Naive thymus-derived CD4-positive, alpha-beta T cell (primary cell): ENCODE measurements at regions of chr2 and their contacts with region 1.

Region 1: DNA sequence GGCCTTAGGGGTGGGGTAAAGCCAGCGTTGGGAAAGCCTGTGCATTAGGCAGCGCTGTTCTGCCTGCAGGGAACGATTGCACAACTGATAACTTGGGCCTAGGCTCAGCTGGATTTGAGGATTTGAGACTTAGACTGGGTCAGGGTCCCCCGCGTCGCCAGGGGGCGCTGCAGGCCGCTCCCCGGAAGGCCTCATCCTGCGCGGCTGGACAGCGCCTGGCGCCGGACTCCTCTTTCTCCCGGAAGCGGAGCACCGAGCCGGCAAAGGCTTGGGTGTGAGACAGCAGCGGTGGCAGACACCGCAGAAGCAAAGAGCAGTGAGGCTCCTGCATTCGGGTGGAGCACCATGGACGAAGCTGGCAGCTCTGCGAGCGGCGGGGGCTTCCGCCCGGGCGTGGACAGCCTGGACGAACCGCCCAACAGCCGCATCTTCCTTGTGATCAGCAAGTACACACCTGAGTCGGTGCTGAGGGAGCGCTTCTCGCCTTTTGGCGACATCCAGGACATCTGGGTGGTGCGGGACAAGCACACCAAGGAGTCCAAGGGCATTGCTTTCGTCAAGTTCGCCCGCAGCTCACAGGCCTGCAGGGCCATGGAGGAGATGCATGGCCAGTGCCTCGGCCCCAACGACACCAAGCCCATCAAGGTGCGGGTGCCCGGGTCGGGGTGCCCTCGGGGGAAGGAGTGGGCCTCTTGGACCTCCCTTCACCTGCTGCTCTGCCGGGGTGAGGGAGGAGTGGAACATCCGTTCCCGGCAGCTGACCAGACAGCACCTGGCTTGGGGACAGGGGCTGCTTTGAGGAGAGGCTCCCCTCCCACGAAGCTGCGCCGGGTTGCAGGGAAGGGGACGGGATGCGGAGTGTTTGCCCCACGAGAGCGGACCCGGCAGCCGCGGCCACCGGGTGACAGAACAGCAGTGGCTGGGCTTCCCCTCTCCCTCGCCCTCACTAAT is at the start of gene RBM45:
- DNase-seq: peak; percentile 68 to 91 (median 78)
- ATAC-seq: peak; percentile 97
- H3K4me3 ChIP-seq: peak within 1 kb of the TSS; percentile 90
- H3K4me3 Mint-ChIP-seq: peak within 1 kb of the TSS; percentile 92 to 96 (median 94)
- H3K27ac ChIP-seq: peak within 1 kb of the TSS; percentile 71
- H3K27ac Mint-ChIP-seq: peak within 1 kb of the TSS; percentile 80 to 93 (median 88)
- H3K4me1 ChIP-seq: peaks cover 6 to 14% of the 10 kb centered on the region in 2 donors
- H3K4me1 Mint-ChIP-seq: peaks cover 20 to 47% (median 39%) of the 10 kb centered on the region in 7 donors
- H3K27me3 ChIP-seq: no peaks in the 10 kb centered on the region
- H3K27me3 Mint-ChIP-seq: peaks cover 0 to under 1% (median 0%) of the 10 kb centered on the region in 5 donors
- total RNA-seq, gene RBM45: 8.0 to 26.7 (median 17.5) TPM

Region 2: DNA sequence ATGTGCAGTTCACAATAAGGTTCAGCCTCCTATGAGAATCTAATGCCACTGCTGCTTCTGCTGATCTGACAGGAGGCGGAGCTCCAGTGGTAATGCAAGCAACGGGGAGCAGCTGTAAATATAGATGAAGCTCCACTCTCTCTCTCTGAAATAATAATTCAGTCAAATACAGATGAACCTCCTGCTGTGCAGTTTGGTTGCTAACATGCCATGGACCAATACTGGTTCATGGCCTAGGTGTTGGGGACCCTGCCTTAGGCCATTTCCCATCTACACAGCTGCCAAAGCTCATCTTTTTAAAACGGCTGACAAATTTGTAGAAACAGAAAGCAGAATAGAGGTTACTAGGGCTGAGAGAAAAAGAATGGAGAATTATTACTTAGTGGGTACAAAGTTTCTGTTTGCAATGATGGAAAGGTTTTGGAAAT is 910.5 kb before region 1 on chr2:
- CTCF ChIA-PET with region 1: no interaction called
- POLR2A ChIA-PET with region 1: no interaction called
- intact Hi-C with region 1: no loop called
- DNase-seq: no peak
- ATAC-seq: no peak
- H3K4me3 ChIP-seq: no peak overlapping the region
- H3K4me3 Mint-ChIP-seq: no peak overlapping the region
- H3K27ac ChIP-seq: no peak overlapping the region
- H3K27ac Mint-ChIP-seq: no peak overlapping the region
- H3K4me1 ChIP-seq: no peaks in the 10 kb centered on the region
- H3K4me1 Mint-ChIP-seq: peaks cover 0 to 10% (median 3%) of the 10 kb centered on the region in 7 donors
- H3K27me3 ChIP-seq: no peaks in the 10 kb centered on the region
- H3K27me3 Mint-ChIP-seq: no peaks in the 10 kb centered on the region

Region 3: GRCh38 chr2:177772529-177772928 is 339.9 kb before region 1 on chr2:
- CTCF ChIA-PET with region 1: no interaction called
- POLR2A ChIA-PET with region 1: no interaction called
- intact Hi-C with region 1: loop called in 1 of 2 experiments (anchors 5 kb)
- DNase-seq: peak in 5 of 9 donors; percentile 22 to 38 (median 25)
- ATAC-seq: no peak
- H3K4me3 ChIP-seq: no peak overlapping the region
- H3K4me3 Mint-ChIP-seq: no peak overlapping the region
- H3K27ac ChIP-seq: no peak overlapping the region
- H3K27ac Mint-ChIP-seq: no peak overlapping the region
- H3K4me1 ChIP-seq: no peaks in the 10 kb centered on the region
- H3K4me1 Mint-ChIP-seq: peaks cover 0 to 7% (median 4%) of the 10 kb centered on the region in 7 donors
- H3K27me3 ChIP-seq: peaks cover 0 to 2% of the 10 kb centered on the region in 2 donors
- H3K27me3 Mint-ChIP-seq: peaks cover 0 to 16% (median 0%) of the 10 kb centered on the region in 5 donors

Region 4: DNA sequence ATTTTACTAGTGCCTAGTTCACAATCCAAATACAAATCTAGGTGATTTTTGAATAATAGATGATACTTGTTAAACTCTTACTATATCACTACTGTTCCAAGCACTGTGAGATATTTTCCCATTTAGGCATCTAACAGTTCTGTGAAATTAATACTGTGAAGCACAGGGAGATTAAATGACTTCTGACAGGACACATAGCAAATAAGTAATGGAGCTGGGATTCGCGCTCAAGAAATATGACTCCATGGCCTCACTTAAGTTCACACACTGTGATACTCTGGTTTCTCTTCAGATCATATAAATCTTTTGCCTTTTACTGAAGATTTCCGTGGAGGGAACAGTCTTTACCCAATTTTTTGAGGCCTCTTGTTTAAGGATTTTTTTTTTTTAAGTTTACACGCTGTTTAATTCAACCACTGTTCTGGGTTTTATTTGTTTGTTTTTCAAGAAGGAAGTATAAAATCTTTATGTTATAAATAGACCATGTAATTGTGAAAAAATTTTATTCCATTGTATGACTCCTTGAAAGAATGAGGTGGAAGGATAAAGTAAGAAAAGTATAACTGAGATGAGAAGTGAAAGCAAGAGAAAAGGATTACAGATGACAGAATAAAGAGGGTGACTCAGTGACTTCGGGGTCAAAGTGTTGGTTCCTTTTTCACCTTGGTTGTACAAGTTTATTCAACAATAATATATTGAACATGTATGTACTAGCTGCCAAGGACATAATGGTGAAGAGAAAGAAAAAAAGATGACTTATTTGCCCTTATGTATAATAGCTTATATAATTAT is 30.0 kb after region 1 on chr2:
- CTCF ChIA-PET with region 1: no interaction called
- POLR2A ChIA-PET with region 1: no interaction called
- intact Hi-C with region 1: no loop called
- DNase-seq: no peak
- ATAC-seq: no peak
- H3K4me3 ChIP-seq: no peak overlapping the region
- H3K4me3 Mint-ChIP-seq: no peak overlapping the region
- H3K27ac ChIP-seq: no peak overlapping the region
- H3K27ac Mint-ChIP-seq: no peak overlapping the region
- H3K4me1 ChIP-seq: no peaks in the 10 kb centered on the region
- H3K4me1 Mint-ChIP-seq: peaks cover 0 to 2% (median 0%) of the 10 kb centered on the region in 7 donors
- H3K27me3 ChIP-seq: no peaks in the 10 kb centered on the region
- H3K27me3 Mint-ChIP-seq: peaks cover 14 to 26% (median 15%) of the 10 kb centered on the region in 5 donors

Region 5: DNA sequence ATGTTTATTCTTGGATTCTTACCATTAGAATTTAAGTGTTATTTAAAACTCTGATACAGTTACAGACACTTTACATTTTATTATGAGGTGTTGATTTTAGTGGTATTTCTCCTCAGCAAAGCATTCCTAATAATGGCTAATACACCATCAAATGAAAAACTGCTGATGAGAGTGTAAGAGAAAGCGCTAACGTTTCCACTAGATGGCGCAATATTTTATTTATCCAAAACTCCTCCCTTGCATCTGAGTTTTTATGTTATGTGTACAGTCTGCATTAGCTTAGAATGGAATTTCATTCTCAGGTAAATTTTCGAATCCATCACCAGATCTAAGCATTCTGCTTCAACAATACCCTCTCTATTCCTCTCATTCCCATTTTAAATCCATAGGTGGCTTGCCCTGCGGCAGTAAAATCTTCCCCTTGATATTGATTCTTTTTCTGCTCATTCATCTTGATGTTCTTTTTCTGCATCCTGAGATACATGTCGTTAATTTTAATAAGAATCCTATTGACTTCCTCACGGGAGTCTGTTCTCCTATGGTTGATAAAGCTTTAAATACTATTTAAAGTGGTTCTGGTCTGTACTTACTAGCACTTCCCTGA is 284.6 kb after region 1 on chr2:
- CTCF ChIA-PET with region 1: no interaction called
- POLR2A ChIA-PET with region 1: no interaction called
- intact Hi-C with region 1: loop called in 1 of 2 experiments (anchors 5 kb)
- DNase-seq: peak in 6 of 9 donors; percentile 5 to 44 (median 30)
- ATAC-seq: peak; percentile 75
- H3K4me3 ChIP-seq: no peak overlapping the region
- H3K4me3 Mint-ChIP-seq: no peak overlapping the region
- H3K27ac ChIP-seq: no peak overlapping the region
- H3K27ac Mint-ChIP-seq: no peak overlapping the region
- H3K4me1 ChIP-seq: no peaks in the 10 kb centered on the region
- H3K4me1 Mint-ChIP-seq: peaks cover 0 to 6% (median 0%) of the 10 kb centered on the region in 7 donors
- H3K27me3 ChIP-seq: no peaks in the 10 kb centered on the region
- H3K27me3 Mint-ChIP-seq: peaks cover 0 to 32% (median 5%) of the 10 kb centered on the region in 5 donors

Region 6: DNA sequence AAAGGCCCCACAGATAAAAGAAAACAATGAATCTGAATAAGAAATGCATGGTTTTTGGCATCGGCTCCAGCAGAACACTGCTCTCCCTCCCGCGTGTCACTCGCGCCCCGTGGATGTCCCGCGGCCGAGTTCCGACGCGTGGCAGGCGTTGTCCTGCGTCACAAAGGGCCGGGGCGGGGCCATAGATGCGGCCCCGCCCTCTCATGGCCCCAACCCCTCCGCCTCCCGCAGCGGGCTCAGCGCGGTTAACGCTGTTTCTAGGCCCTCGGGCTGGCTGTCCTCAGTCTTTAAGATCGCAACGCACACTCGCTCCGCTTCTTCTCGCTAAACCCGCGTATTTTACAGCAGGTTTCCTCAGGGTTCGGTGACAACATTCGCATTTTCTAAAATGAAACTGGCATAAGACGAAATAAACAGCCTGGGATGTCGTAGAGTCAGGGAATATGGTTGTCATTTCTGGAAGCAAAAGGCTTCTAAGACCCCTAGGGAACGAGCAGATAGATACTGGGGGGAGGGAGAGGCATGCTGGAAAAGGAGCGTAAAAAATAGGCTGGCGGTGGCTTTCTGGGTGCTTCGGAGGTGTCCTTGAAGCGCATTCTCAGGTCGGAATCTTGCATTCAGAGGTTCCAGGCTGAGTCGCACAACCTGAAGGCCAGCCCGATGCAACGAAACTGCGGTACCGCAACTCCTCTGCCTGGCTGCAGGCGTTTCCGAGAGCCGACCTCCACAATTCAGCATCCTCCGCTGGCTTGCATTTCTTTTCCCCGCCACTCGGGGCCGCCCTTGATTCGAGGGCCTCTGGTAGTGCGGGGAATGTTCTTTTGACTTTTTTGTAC is 366.2 kb after region 1 on chr2 and contains the start of gene FKBP7:
- CTCF ChIA-PET with region 1: no interaction called
- POLR2A ChIA-PET with region 1: no interaction called
- intact Hi-C with region 1: loop called in 1 of 2 experiments (anchors 5 kb)
- DNase-seq: peak; percentile 71 to 87 (median 80)
- ATAC-seq: peak; percentile 90
- H3K4me3 ChIP-seq: peak within 1 kb of the TSS; percentile 91
- H3K4me3 Mint-ChIP-seq: peak within 1 kb of the TSS; percentile 94 to 100 (median 99)
- H3K27ac ChIP-seq: peak within 1 kb of the TSS; percentile 80
- H3K27ac Mint-ChIP-seq: peak within 1 kb of the TSS; percentile 91 to 99 (median 98)
- H3K4me1 ChIP-seq: peaks cover 22 to 28% of the 10 kb centered on the region in 2 donors
- H3K4me1 Mint-ChIP-seq: peaks cover 27 to 45% (median 41%) of the 10 kb centered on the region in 7 donors
- H3K27me3 ChIP-seq: no peaks in the 10 kb centered on the region
- H3K27me3 Mint-ChIP-seq: no peaks in the 10 kb centered on the region
- total RNA-seq, gene FKBP7: 0.64 to 2.7 (median 1.9) TPM

Region 7: DNA sequence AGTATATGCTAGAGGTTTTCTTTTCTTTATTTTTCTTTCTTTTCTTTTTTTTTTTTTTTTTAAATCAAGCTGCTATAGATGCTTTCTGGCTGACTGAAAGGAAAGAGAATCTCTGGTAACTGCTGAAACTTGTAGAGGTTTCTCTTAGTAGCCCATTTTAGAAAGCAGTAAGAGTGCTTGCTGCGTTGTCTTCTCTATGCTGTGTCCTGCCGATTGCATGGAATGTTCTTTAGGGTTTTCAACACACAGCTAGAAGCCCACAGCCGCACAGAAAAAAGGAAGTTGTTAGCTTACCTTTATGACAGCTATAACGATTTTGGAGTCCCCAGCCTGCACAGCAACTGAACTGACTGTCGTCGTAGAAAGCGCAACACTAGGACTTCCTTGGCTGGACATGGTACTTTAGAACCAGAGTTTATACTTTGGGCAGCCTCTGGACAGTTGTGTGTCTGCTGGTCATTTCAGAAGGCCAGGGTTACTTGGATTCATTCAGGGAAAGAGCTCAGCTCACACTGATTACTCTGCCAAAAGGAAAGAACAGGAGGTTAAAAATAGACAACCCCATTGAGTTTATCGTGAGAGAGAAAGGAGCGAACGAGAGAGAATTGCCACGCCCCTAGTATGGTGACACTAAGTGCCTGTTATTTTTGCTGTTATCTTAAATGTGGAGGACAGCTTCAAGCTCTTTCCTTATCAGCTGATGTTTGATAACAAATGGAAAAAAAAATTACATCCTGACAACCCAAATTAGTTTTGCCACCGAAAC is 937.3 kb after region 1 on chr2 and contains the start of gene CCDC141:
- CTCF ChIA-PET with region 1: no interaction called
- POLR2A ChIA-PET with region 1: no interaction called
- intact Hi-C with region 1: loop called in 1 of 2 experiments (anchors 10 kb)
- DNase-seq: peak; percentile 7 to 57 (median 40)
- ATAC-seq: peak; percentile 78
- H3K4me3 ChIP-seq: peak within 1 kb of the TSS; percentile 56
- H3K4me3 Mint-ChIP-seq: peak within 1 kb of the TSS; percentile 79 to 97 (median 93)
- H3K27ac ChIP-seq: peak within 1 kb of the TSS; percentile 81
- H3K27ac Mint-ChIP-seq: peak within 1 kb of the TSS; percentile 89 to 99 (median 97)
- H3K4me1 ChIP-seq: peaks cover 4 to 36% of the 10 kb centered on the region in 2 donors
- H3K4me1 Mint-ChIP-seq: peaks cover 10 to 67% (median 52%) of the 10 kb centered on the region in 7 donors
- H3K27me3 ChIP-seq: no peaks in the 10 kb centered on the region
- H3K27me3 Mint-ChIP-seq: no peaks in the 10 kb centered on the region
- total RNA-seq, gene CCDC141: 11.6 to 39.2 (median 35.1) TPM